K562 (cell line): ENCODE measurements at regions of chr7 and their contacts with region 1.

Region 1: DNA sequence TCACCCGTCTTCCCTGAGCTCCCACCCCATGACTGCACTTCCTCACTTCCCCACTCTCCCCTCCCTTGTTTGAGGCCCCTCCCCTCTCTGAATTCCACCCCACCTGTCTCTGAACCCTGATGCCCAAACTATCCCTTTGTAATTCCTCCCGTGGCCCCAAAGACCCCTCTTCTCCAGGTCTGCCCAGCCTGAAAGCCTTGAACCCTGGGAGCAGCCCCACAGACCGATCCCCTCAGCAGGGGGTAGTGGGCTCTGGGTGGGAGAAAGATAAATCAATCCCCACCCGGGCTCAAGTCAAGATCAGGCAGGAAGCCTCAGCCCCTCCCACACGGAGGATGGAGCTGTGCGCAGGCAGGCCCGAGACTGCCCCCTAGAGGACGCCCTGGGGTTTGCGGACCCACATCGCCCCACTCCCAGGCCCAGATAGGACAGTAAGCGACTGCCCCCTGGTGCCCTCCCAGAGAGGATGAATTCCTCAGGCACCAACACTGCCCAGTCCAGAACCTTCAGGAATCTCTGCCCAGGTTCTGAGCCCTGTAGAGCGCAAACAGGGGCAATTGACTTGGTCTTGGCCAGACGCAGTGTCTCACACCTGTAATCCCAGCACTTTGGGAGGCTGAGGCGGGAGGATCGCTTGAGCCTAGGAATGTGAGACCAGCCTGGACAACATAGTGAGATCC is 11.7 kb downstream of the HSPB1 start:
- DNase-seq: peak; percentile 95 to 98 (median 96)
- ATAC-seq: peak; percentile 73
- H3K4me3 ChIP-seq: no peak overlapping the region
- H3K27ac ChIP-seq: no peak overlapping the region
- H3K4me1 ChIP-seq: peaks cover 25 to 42% of the 10 kb centered on the region in 2 experiments; a peak in 4 of 5 replicates
- H3K27me3 ChIP-seq: no peaks in the 10 kb centered on the region
- CTCF ChIP-seq: peak; percentile 100
- EP300 ChIP-seq: peak; percentile 72
- POLR2A ChIP-seq: no peak
- RAD21 ChIP-seq: peak; percentile 100

Region 2: DNA sequence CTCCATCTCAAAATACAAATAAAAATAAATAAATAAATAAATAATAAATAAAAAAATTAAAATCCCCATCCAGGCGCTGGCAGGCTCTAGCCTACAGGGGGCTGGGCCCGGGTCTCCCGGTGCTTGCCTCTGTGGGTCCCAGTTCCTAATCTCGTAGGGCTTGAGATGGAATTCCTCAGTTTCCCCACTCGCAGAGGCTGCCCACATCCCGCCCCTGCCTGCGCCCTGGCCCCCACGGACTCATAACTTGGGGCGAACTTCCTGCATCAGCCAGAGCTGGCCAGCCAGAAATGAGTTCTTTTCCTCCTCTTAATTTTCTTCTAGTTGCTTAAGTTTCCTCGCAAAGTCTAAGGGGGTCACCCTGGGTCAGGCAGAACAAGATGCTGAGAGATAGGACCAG is 134.5 kb before region 1 on chr7:
- CTCF ChIA-PET with region 1: interaction called, 62 read pairs
- POLR2A ChIA-PET with region 1: interaction called, 3 read pairs
- in situ Hi-C with region 1: loop called (anchors 5 kb)
- intact Hi-C with region 1: loop called (anchors 1 kb)
- DNase-seq: peak in 1 of 4 experiments; percentile 36
- ATAC-seq: no peak
- H3K4me3 ChIP-seq: no peak overlapping the region
- H3K27ac ChIP-seq: no peak overlapping the region
- H3K4me1 ChIP-seq: peaks cover 0 to 11% of the 10 kb centered on the region in 2 experiments; a peak in 2 of 5 replicates
- H3K27me3 ChIP-seq: peaks cover 4 to 15% of the 10 kb centered on the region in 2 experiments; a peak in 3 of 5 replicates
- CTCF ChIP-seq: no peak
- EP300 ChIP-seq: no peak
- POLR2A ChIP-seq: no peak
- RAD21 ChIP-seq: no peak

Region 3: DNA sequence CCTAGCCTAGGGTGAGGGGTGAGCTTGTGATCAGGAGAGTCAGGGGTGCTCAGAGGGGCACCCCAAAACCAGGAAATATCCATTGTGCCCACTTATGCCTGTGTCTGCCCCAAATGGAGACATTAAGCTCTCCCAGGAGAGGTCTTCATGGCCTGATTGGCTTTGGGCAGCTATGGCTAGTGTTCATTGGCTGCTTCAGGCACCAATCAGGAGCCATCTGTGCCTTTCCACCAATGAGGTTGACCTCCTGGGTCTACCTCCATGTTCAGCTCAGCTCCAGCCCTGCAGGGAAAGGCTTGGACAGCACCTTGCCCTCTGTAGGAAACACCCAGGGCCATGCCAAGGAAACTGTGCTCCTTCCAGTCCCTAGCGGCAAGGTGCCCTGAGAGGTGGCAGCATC is 35.6 kb before region 1 on chr7:
- CTCF ChIA-PET with region 1: interaction called, 4 read pairs
- POLR2A ChIA-PET with region 1: interaction called, 3 read pairs
- in situ Hi-C with region 1: no loop called
- intact Hi-C with region 1: loop called (anchors 5 kb)
- DNase-seq: peak; percentile 52 to 72 (median 58)
- ATAC-seq: peak; percentile 82
- H3K4me3 ChIP-seq: no peak overlapping the region
- H3K27ac ChIP-seq: no peak overlapping the region
- H3K4me1 ChIP-seq: peaks cover 0 to 27% of the 10 kb centered on the region in 2 experiments; a peak in 3 of 5 replicates
- H3K27me3 ChIP-seq: peaks cover 42 to 54% of the 10 kb centered on the region in 2 experiments; a peak in 4 of 5 replicates
- CTCF ChIP-seq: no peak
- EP300 ChIP-seq: no peak
- POLR2A ChIP-seq: no peak
- RAD21 ChIP-seq: no peak

Region 4: DNA sequence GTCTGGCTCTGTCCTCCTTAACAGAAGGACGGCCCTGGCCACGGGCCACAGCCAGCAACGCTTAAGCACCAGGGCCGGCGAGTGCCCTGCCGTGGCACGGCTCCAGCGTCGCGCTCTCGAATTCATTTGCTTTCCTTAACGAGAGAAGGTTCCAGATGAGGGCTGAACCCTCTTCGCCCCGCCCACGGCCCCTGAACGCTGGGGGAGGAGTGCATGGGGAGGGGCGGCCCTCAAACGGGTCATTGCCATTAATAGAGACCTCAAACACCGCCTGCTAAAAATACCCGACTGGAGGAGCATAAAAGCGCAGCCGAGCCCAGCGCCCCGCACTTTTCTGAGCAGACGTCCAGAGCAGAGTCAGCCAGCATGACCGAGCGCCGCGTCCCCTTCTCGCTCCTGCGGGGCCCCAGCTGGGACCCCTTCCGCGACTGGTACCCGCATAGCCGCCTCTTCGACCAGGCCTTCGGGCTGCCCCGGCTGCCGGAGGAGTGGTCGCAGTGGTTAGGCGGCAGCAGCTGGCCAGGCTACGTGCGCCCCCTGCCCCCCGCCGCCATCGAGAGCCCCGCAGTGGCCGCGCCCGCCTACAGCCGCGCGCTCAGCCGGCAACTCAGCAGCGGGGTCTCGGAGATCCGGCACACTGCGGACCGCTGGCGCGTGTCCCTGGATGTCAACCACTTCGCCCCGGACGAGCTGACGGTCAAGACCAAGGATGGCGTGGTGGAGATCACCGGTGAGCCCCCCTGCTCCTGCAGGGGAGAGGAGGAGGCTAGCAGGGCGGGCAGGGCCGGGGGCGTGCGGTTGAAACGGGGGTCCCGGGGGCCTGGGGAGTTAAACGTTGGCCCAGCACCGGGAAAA is 11.6 kb before region 1 on chr7 and contains the start of gene HSPB1:
- CTCF ChIA-PET with region 1: interaction called, 9 read pairs
- POLR2A ChIA-PET with region 1: interaction called, 7 read pairs
- in situ Hi-C with region 1: no loop called
- intact Hi-C with region 1: loop called (anchors 2 kb)
- DNase-seq: peak; percentile 92 to 96 (median 92)
- ATAC-seq: peak; percentile 84
- H3K4me3 ChIP-seq: peak within 1 kb of the TSS; percentile 66
- H3K27ac ChIP-seq: peak within 1 kb of the TSS; percentile 81
- H3K4me1 ChIP-seq: peaks cover 17 to 56% of the 10 kb centered on the region in 2 experiments
- H3K27me3 ChIP-seq: no peaks in the 10 kb centered on the region
- CTCF ChIP-seq: 0 out of 6 replicates have a peak, but pooled peaks of 1 of the 3 experiments have one; percentile 10
- EP300 ChIP-seq: no peak; the same call in 1 of the 2 replicates
- POLR2A ChIP-seq: peak; percentile 92
- RAD21 ChIP-seq: no peak; a peak in 1 of 4 replicates
- polyA plus RNA-seq, gene HSPB1: 97.3 to 128 TPM

Region 5: DNA sequence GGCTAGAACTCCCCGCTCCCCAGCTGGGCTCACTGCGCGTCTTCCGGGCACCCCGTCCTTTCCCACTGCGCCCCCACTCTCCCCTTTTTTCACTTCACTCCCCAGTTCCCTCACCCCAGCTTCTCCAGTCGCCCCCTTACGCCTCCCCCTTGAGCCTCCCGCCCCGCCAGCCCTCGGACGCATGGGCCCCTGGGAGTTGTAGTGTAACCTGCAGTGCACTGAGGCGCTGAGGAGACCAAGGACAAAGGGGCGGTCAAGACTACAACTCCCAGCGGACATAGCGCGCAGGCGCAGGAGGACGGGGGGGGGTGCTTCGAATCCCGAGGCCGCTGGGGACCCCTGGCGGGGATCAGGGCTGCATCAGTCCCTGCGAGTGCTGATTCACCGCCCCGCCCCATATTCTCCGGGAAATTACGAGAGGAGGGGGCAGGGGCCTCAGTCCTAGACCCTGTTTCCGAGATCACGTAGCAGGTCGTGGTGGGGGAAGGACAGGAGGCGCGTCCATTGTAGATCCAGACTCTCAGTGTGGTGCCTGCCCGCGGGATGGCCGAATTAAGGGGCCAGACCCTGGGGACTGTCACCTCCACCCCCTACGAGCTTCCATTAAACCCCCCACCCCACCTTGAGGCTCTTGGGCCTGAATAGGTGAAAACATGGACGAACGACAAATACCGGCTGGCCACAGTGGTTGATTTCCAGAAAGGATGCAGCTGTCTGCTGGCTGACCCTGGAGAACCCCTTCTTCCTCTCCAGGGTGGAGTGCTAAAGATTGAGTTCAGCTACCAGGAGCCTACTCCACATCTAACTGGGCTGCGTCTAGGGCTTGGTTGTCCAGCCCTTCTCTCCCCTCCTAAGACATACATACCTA is 45.2 kb after region 1 on chr7:
- CTCF ChIA-PET with region 1: no interaction called
- POLR2A ChIA-PET with region 1: interaction called, 4 read pairs
- in situ Hi-C with region 1: no loop called
- intact Hi-C with region 1: loop called (anchors 1 kb)
- DNase-seq: peak; percentile 98 to 99 (median 99)
- ATAC-seq: peak; percentile 94
- H3K4me3 ChIP-seq: peak overlapping the region; percentile 94
- H3K27ac ChIP-seq: peak overlapping the region; percentile 90
- H3K4me1 ChIP-seq: peaks cover 15 to 32% of the 10 kb centered on the region in 2 experiments
- H3K27me3 ChIP-seq: no peaks in the 10 kb centered on the region
- CTCF ChIP-seq: peak; percentile 88 to 94 (median 88)
- EP300 ChIP-seq: peak; percentile 70
- POLR2A ChIP-seq: peak; percentile 38
- RAD21 ChIP-seq: peak; percentile 75 to 88